PC-3 (cell line): ENCODE measurements at regions of chr3 and their contacts with region 1.

Region 1: GRCh38 chr3:108662130-108662738 is 72.7 kb downstream of the DZIP3 start:
- DNase-seq: peak; percentile 78
- ATAC-seq: peak; percentile 89
- H3K4me3 ChIP-seq: no peak overlapping the region
- H3K27ac ChIP-seq: no peak overlapping the region
- H3K4me1 ChIP-seq: no peaks in the 10 kb centered on the region
- H3K27me3 ChIP-seq: no peaks in the 10 kb centered on the region
- CTCF ChIP-seq: peak; percentile 91

Region 2: GRCh38 chr3:108489771-108490170 is 172.5 kb before region 1 on chr3:
- CTCF ChIA-PET with region 1: interaction called, 3 read pairs
- POLR2A ChIA-PET with region 1: no interaction called
- intact Hi-C with region 1: loop called (anchors 2 kb)
- DNase-seq: peak; percentile 71
- ATAC-seq: peak; percentile 35; the same call in 1 of the 2 replicates
- H3K4me3 ChIP-seq: no peak overlapping the region
- H3K27ac ChIP-seq: no peak overlapping the region
- H3K4me1 ChIP-seq: peaks cover 16% of the 10 kb centered on the region
- H3K27me3 ChIP-seq: no peaks in the 10 kb centered on the region
- CTCF ChIP-seq: peak; percentile 94

Region 3: DNA sequence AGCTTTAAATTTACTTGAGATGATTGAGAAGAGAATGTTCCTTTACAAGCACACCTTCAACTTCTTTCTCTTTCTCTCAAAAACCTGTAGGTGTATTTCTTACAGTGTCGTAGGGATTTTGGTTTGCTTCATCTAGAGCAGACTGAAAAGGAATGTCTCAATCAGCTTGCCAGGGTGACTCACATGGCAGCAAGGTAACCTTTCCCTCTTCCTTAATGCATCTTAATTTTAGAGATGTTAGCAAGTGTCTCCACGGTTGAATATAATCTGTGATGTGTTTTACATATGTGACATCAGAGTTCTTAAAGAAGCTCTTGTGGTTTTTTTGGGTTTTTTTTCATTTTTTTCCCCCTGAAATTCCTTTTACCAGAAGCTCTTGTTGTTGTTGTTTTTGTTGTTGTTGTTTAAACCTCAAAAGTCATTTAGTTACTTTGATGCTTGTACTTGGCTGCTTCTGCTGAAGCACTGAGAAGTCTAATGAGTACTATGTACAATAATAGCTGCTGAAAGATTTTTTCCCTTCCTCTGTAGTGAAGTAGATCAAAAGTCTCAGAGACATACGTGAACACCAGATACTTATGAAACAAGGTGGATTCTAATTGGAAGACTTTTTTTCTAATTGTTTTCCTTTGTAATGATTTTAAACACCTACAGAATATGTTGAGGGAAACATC is 11.9 kb after region 1 on chr3:
- CTCF ChIA-PET with region 1: no interaction called
- POLR2A ChIA-PET with region 1: no interaction called
- intact Hi-C with region 1: no loop called
- DNase-seq: no peak
- ATAC-seq: no peak
- H3K4me3 ChIP-seq: no peak overlapping the region
- H3K27ac ChIP-seq: no peak overlapping the region
- H3K4me1 ChIP-seq: no peaks in the 10 kb centered on the region
- H3K27me3 ChIP-seq: no peaks in the 10 kb centered on the region
- CTCF ChIP-seq: no peak

Region 4: GRCh38 chr3:108818404-108818803 is 156.2 kb after region 1 on chr3:
- CTCF ChIA-PET with region 1: interaction called, 5 read pairs
- POLR2A ChIA-PET with region 1: no interaction called
- intact Hi-C with region 1: loop called (anchors 5 kb)
- DNase-seq: peak; percentile 61
- ATAC-seq: peak; percentile 94
- H3K4me3 ChIP-seq: no peak overlapping the region
- H3K27ac ChIP-seq: no peak overlapping the region
- H3K4me1 ChIP-seq: no peaks in the 10 kb centered on the region
- H3K27me3 ChIP-seq: peaks cover 40% of the 10 kb centered on the region
- CTCF ChIP-seq: peak; percentile 58

Region 5: GRCh38 chr3:108914774-108915641 is 252.8 kb after region 1 on chr3:
- CTCF ChIA-PET with region 1: interaction called, 10 read pairs
- POLR2A ChIA-PET with region 1: no interaction called
- intact Hi-C with region 1: loop called (anchors 1 kb)
- DNase-seq: peak; percentile 85
- ATAC-seq: peak; percentile 97
- H3K4me3 ChIP-seq: no peak overlapping the region
- H3K27ac ChIP-seq: no peak overlapping the region
- H3K4me1 ChIP-seq: no peaks in the 10 kb centered on the region
- H3K27me3 ChIP-seq: peaks cover 21% of the 10 kb centered on the region
- CTCF ChIP-seq: peak; percentile 92

Region 6: GRCh38 chr3:109023656-109024254 is 361.5 kb after region 1 on chr3:
- CTCF ChIA-PET with region 1: no interaction called
- POLR2A ChIA-PET with region 1: no interaction called
- intact Hi-C with region 1: loop called (anchors 2 kb)
- DNase-seq: peak; percentile 58
- ATAC-seq: peak; percentile 71
- H3K4me3 ChIP-seq: no peak overlapping the region
- H3K27ac ChIP-seq: no peak overlapping the region
- H3K4me1 ChIP-seq: no peaks in the 10 kb centered on the region
- H3K27me3 ChIP-seq: peaks cover 24% of the 10 kb centered on the region
- CTCF ChIP-seq: peak; percentile 92

Region 7: DNA sequence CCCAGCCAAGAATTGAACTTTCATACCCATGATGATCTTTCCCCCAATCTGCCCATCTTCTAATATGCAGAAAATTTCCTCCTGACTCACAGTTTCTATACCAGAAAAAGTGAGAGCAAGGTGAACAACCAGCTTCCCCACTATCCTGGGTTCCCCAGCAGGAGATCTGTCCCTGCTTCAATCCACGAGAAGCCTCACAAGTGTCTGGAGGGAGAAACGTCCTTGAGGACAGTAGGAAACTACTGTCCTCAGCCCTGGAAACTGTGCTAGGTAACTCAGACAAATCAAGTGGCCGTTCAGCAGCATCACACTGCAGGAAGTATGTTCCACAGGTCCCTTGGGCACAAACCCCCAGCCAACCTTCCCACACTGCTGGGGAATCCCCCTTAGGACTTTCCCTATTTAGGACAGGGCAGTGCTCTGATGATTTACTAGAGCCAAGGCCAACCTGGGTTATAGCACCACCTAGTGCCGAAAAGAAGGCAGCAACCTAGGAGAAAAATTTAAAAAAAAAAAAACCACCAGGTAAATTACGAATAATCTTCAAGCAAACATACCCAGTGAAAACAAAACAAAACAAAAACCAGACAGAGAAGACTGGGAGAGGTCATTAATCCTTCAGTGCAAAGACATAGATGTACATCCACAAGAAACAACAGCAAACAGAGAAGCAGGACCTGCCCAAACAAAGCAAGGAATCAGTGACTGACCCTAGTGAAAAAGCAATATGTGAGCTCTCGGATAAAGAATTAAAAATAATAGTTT is 419.7 kb after region 1 on chr3:
- CTCF ChIA-PET with region 1: no interaction called
- POLR2A ChIA-PET with region 1: no interaction called
- intact Hi-C with region 1: loop called (anchors 1 kb)
- DNase-seq: peak; percentile 57
- ATAC-seq: peak; percentile 68
- H3K4me3 ChIP-seq: no peak overlapping the region
- H3K27ac ChIP-seq: no peak overlapping the region
- H3K4me1 ChIP-seq: no peaks in the 10 kb centered on the region
- H3K27me3 ChIP-seq: peaks cover 34% of the 10 kb centered on the region
- CTCF ChIP-seq: peak; percentile 90